ENCODE measurements at regions of chr1 and their contacts with region 1.

Region 1: DNA sequence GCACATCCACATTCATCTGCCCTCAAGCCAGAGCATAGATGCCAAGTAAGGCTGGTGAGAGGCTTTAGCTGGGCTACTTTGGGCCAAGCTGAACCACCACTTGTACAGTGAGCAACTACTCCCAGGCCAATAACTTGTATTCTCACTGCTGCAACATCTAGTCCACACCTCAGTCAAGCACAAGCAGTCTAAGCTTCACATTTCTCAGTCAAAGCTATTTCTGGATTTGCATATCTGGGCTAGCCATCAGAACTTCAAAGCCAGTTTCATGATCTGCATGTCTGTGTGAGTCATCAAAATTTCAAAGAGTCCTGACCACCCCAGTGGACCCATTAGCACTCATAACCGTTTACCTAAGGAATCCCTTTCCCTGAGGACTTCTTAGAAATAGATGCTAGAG is 77.7 kb upstream of the DIRAS3 start:
- DNase-seq: peak; percentile 60
- H3K4me3 ChIP-seq: no peak overlapping the region
- H3K27ac ChIP-seq: no peak overlapping the region
- H3K27me3 ChIP-seq: no peaks in the 10 kb centered on the region
- CTCF ChIP-seq: no peak

Region 2: DNA sequence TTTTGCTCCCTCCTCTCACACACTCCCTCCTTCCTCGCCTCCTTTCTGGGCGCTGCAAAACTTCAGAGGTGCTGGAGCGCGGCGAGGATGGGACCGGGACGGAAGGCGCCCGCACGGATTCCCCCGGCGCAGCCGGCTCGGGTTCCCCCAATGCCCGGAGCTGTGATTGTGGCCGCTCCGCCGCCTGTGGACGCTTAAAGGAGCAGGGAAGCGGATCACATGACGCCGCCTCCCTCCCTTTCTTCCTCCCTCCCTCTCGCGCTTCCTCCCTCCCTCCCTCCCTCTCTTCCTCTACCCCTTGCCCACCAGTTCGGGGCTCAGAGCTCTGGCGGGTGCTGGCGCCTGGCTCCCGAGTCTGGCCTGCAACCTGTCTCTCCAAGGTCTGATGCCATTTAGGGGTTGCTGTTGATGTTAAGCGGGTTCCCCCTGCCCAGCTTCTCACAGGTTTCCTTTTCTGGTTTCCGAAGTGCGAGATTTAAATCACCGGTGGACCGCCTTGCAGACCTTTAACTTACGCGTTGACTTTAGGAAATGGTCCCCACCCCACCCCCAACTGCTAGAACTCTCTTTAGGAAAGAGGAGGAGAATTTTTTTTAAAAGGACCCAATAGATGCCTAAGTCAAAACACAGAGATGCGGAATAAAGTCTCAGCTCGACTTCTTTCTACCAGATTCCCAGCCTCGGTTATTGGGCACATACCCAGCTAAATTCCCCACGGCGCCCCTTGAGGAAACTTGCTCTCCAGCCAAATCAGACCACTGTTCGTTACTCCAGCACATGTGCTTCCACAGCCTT is 104.4 kb after region 1 on chr1 and contains the start of gene WLS:
- in situ Hi-C with region 1: loop called (anchors 25 kb)
- DNase-seq: peak; percentile 67
- H3K4me3 ChIP-seq: peak within 1 kb of the TSS; percentile 87
- H3K27ac ChIP-seq: peak within 1 kb of the TSS; percentile 48
- H3K27me3 ChIP-seq: no peaks in the 10 kb centered on the region
- CTCF ChIP-seq: peak; percentile 40

Region 3: GRCh38 chr1:68321084-68321685 is 193.0 kb after region 1 on chr1:
- in situ Hi-C with region 1: loop called (anchors 25 kb)
- DNase-seq: peak; percentile 57
- H3K4me3 ChIP-seq: no peak overlapping the region
- H3K27ac ChIP-seq: no peak overlapping the region
- H3K27me3 ChIP-seq: no peaks in the 10 kb centered on the region
- CTCF ChIP-seq: peak; percentile 95

Region 4: DNA sequence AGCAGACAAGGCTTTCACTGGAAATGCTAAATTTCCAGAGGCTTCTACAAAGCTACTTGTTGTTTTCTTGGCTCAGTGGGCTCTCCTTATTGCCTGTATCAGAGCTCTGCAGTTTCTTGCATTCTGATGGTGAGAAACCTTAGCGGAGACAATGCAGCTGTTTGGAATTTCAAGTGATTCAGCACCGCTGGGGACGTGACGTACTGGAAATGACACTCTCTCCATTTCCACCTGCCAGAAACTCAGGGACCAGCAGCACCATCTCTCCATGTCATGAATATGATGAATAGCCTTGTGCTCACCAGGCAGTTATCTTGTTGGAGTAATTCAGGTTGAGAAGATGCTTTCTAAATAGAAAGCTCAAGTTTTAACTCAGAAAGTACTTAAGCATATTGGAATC is 865.9 kb after region 1 on chr1:
- in situ Hi-C with region 1: no loop called
- DNase-seq: no peak
- H3K4me3 ChIP-seq: no peak overlapping the region
- H3K27ac ChIP-seq: no peak overlapping the region
- H3K27me3 ChIP-seq: no peaks in the 10 kb centered on the region
- CTCF ChIP-seq: no peak

Measured in brain microvascular endothelial cell (primary cell).